ENCODE measurements at regions of chr5 and their contacts with region 1.

Region 1: GRCh38 chr5:20694121-20694520 is 706.1 kb upstream of the CDH18 start:
- DNase-seq: no peak
- ATAC-seq: no peak

Region 2: DNA sequence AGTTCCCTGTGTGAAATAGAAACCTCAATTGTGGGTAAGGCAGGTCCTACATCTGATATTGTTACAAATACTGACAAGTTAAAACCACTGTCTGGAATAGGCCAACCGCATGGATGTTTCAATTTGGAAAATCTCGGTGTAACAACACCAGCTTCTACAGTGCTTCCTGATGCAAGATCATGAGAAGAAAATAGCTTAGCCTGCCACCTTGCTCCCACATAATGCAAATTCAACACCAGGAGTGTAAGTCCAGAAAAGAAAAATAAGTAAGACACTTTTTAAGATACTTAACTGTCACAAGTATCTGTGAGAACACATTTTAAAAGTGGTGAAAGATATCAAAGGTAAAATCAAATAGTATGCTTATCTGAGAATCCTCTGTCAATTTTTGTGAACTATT is 258.6 kb before region 1 on chr5:
- intact Hi-C with region 1: loop called (anchors 5 kb)
- DNase-seq: no peak
- ATAC-seq: no peak

Measured in sciatic nerve (tissue), 2 donors.